ENCODE measurements at regions of chr5 and their contacts with region 1.

Region 1: GRCh38 chr5:128135286-128135685 is 51.7 kb downstream of the SLC12A2 start:
- DNase-seq: no peak
- H3K4me3 ChIP-seq: no peak overlapping the region
- H3K27ac ChIP-seq: no peak overlapping the region
- H3K4me1 ChIP-seq: no peaks in the 10 kb centered on the region
- H3K27me3 ChIP-seq: no peaks in the 10 kb centered on the region
- CTCF ChIP-seq: no peak

Region 2: GRCh38 chr5:128093368-128093767 is 41.9 kb before region 1 on chr5:
- intact Hi-C with region 1: no loop called
- DNase-seq: no peak
- H3K4me3 ChIP-seq: no peak overlapping the region
- H3K27ac ChIP-seq: no peak overlapping the region
- H3K4me1 ChIP-seq: no peaks in the 10 kb centered on the region
- H3K27me3 ChIP-seq: no peaks in the 10 kb centered on the region
- CTCF ChIP-seq: no peak

Region 3: DNA sequence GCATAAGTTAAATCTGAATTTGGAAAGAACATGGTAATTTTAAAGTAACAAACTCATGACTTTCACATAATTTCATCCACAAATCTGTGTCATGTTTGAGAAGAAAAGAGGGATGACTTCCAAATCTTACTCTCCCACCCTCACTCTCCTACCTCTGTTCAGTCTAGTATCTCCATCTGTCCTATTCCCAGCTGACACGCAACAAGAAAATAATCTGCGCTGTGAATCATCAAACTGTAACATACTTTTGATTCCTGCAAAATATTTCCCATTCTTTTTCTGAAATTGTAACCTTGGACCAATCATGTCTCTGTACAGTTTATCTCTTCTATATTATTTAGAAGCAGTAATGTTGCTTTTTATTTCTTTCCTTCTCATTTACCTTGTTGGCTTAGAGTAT is 39.7 kb after region 1 on chr5:
- intact Hi-C with region 1: loop called (anchors 10 kb)
- DNase-seq: no peak
- H3K4me3 ChIP-seq: no peak overlapping the region
- H3K27ac ChIP-seq: no peak overlapping the region
- H3K4me1 ChIP-seq: no peaks in the 10 kb centered on the region
- H3K27me3 ChIP-seq: no peaks in the 10 kb centered on the region
- CTCF ChIP-seq: no peak

Measured in colonic mucosa (tissue), 4 donors.